PC-9 (cell line): ENCODE measurements at regions of chr16 and their contacts with region 1.

Region 1: DNA sequence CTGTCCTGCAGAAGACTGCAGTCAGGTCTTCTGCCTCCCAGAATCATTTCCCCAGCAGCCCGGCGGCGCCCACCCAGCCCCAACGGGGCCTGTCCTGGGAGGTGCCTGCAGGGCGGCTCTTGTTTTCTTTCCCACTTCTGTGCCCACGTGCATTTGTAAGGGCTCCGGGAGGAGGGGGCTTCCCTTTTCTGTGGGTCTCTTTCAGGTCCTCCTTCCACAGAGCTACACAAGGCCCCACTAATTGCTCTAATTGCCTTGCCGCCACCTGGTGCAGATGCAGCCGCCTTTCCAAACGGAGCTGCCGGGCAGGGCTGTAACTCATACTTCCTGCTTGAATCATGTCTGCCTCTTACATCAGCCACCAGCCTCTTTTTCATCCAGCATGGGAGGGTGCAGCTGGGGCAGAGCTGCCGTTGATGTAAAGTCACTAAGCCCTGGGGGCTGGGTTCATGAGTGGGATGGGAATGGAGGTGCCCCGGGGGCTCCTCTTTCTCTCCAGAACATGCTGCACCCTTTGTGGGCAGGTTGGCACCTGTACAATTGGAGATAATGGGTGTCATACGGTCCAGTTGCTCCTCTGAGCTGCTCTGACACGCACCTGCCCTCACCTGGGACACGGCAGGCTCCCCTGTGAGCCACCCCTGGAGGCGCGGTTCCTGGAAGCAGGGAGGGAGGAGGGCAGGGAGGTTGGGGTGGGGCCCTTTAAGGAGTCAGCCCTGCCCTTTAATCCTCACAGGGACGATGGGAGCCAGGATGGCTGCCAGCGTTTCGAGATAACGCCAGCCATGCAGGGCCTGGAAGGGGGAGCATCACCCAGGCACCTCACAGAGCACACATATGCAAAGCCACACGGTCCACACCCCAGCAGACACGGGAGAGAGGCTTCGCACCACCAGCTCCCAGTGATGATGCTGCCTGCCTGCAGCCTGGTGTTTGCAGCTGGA is 41.1 kb upstream of the KLHDC4 start:
- DNase-seq: peak; percentile 85 to 91
- H3K4me3 ChIP-seq: peak overlapping the region; percentile 71
- H3K27ac ChIP-seq: peak overlapping the region; percentile 95
- H3K4me1 ChIP-seq: peaks cover 23% of the 10 kb centered on the region
- H3K27me3 ChIP-seq: no peaks in the 10 kb centered on the region
- CTCF ChIP-seq: no peak

Region 2: DNA sequence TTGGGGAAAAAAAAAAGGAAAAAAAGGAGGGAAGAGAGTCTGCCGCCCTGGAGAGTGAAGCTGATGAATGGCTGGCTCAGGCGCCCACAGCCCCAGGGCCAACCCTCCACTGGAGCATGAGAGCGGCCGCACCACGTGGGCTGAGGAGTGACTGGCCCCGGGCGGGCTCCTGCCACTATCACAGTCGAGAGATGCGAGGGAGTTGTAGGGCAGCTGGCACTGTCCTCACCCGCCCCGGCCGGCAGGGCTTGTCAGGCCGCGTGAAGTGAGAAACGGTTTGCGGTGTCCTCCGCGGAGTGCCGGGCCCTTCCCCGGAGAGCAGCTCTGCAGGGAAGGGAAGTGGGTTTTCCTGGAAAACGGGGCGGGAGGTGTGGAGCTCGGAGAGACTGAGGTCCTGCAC is 158.6 kb before region 1 on chr16:
- CTCF ChIA-PET with region 1: no interaction called
- POLR2A ChIA-PET with region 1: no interaction called
- intact Hi-C with region 1: no loop called
- DNase-seq: no peak
- H3K4me3 ChIP-seq: no peak overlapping the region
- H3K27ac ChIP-seq: no peak overlapping the region
- H3K4me1 ChIP-seq: no peaks in the 10 kb centered on the region
- H3K27me3 ChIP-seq: peaks cover 71% of the 10 kb centered on the region
- CTCF ChIP-seq: no peak

Region 3: DNA sequence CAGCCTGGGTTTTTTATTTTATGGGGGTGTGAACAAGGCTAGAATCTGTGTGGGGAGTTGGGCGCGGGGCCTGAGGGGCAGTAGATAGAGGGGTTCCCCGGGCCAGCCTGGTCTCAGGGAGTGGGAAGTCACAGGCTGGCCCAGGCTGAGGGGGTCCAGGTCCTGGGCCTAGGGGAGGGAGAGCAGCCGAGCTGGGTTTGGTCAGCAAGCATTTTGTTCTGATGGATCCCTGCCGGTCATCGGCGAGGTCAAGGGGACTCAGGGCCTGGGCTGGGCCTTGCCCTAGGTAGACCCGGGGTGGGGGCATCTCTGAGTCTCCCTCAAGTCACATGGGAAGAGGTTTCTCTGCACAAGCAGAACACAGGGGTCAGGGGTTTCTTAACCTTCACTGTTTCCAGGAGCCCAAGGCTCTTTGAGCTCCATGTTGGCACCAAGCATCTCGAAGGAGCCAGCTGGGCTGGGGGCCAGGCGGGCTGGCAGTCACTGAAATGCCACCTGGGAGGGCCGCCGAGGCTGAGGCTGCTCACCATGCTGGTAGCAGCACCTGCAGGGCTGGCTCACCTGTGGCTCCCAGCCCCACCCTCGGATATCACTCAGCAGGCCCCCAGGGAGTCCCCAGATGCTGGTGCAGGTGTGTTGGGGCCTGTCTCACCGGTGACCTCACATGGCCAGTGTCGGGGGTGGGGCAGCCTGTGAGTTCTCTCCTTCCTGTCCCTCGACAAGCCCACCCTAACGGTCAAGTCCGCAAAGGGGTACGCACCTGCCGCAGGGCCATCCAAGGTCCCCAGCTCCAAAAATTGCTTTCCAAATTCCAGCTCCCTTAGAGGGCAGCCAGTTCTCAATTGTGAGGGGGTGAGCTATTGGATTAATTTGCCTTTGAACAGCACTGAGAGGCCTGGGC is 21.4 kb after region 1 on chr16:
- CTCF ChIA-PET with region 1: interaction called, 4 read pairs
- POLR2A ChIA-PET with region 1: no interaction called
- intact Hi-C with region 1: loop called (anchors 2 kb)
- DNase-seq: peak in 1 of 2 experiments; percentile 52
- H3K4me3 ChIP-seq: no peak overlapping the region
- H3K27ac ChIP-seq: no peak overlapping the region
- H3K4me1 ChIP-seq: no peaks in the 10 kb centered on the region
- H3K27me3 ChIP-seq: no peaks in the 10 kb centered on the region
- CTCF ChIP-seq: no peak